ENCODE measurements at regions of chr2 and their contacts with region 1.

Region 1: DNA sequence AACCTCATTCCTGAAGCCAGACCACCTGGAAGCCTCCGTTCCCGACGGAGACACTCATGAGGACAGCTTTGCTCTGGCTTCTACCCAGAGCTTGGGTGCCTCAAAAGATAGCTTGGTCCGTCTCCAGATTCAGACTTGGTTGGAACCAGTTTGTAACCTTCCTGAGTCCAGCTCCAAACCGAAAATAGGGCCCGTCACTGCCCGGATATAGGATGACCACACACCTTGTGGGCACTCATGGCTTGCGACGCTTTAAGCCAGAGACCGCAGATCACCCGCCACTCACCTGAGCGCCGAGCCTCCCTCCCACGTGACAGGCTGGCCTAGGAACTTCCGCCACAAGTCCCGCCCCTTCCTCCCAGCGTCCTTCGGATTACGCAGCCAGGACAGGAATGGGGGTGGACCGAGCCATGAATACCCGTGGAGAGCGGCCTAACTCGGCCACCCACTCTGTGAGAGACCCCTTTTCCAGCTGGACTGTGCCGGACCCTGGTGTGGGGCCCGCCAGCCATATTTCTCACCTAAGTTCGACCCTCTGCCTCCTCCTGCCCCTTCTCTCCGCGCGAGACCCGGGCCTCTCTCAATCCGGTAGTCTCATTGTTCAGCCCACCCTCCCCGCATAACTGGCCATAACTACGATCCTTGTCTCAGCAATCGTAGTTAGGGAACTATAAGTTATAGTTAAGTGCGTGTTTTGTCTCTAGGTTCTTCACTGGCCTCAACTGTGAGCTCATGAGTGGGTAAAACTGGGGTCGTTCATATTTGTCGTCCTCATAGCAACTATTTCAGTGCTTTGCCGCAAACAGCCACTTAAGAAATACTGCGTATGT is at the start of gene MPV17:
- DNase-seq: peak; percentile 65 to 93 (median 87)
- ATAC-seq: peak; percentile 96
- H3K4me3 ChIP-seq: peak within 1 kb of the TSS; percentile 80 to 81
- H3K4me3 Mint-ChIP-seq: peak within 1 kb of the TSS; percentile 99
- H3K27ac ChIP-seq: peak within 1 kb of the TSS; percentile 89 to 94
- H3K27ac Mint-ChIP-seq: peak within 1 kb of the TSS; percentile 99
- H3K4me1 ChIP-seq: peaks cover 9% of the 10 kb centered on the region
- H3K4me1 Mint-ChIP-seq: peaks cover 25% of the 10 kb centered on the region
- H3K27me3 ChIP-seq: no peaks in the 10 kb centered on the region
- H3K27me3 Mint-ChIP-seq: no peaks in the 10 kb centered on the region
- CTCF ChIP-seq: no peak
- total RNA-seq, gene MPV17: 23.6 to 26.0 TPM

Region 2: DNA sequence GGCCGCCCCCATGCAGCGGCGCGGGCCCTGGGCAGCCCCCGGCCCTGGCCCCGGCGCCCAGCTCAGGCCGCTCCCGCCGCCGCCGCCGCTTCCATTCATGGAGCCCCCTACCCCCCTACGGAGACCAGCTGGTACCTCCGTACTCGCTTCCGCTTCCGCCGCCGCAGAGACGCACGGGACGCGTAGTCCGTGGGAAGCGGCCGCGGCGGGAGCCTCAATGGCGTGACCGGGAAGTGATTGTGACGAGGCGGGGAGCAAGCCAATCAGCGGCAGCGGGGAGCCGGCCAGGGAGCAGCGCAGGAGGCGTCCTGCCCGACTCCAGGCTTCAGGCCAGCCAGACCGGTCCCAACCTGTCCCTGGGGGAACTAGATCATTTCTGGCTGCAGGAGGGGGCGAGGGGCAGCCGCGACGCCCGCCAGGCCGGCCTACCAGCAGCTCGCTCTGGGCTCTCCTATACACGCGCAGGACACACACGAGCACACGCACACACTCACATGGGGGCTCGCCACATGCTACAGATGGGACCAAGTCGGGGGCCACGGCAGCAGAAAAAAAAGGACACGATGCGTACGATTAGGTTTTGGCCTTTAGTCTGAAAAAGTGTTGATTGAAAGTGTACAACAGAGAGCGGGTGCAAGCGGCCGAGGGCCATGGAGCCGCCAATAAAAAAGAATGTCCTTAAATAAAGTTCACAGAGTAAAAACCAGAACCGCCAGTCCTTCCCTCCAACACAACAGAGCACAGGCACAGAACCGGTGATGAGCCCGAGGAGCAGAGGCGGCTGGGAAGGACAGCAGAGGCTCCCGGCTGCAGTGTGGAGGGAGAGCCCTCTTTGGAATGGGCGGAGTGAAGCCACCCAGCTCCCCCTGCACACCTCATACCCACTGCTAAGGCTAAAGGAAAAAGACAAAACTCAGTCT is 57.9 kb after region 1 on chr2 and contains the start of gene ZNF513:
- CTCF ChIA-PET with region 1: no interaction called
- POLR2A ChIA-PET with region 1: interaction called, 11 read pairs
- intact Hi-C with region 1: no loop called
- DNase-seq: peak; percentile 70 to 94 (median 89)
- ATAC-seq: peak; percentile 89
- H3K4me3 ChIP-seq: peak within 1 kb of the TSS; percentile 65 to 72
- H3K4me3 Mint-ChIP-seq: peak within 1 kb of the TSS; percentile 87
- H3K27ac ChIP-seq: peak within 1 kb of the TSS; percentile 66 to 94
- H3K27ac Mint-ChIP-seq: peak within 1 kb of the TSS; percentile 94
- H3K4me1 ChIP-seq: peaks cover 17% of the 10 kb centered on the region
- H3K4me1 Mint-ChIP-seq: peaks cover 22% of the 10 kb centered on the region
- H3K27me3 ChIP-seq: no peaks in the 10 kb centered on the region
- H3K27me3 Mint-ChIP-seq: no peaks in the 10 kb centered on the region
- CTCF ChIP-seq: no peak
- total RNA-seq, gene ZNF513: 19.0 to 21.6 TPM

Measured in CD8-positive, alpha-beta T cell (primary cell).